Right ventricle myocardium inferior (tissue), 1 donor: ENCODE measurements at regions of chr3 and their contacts with region 1.

Region 1: DNA sequence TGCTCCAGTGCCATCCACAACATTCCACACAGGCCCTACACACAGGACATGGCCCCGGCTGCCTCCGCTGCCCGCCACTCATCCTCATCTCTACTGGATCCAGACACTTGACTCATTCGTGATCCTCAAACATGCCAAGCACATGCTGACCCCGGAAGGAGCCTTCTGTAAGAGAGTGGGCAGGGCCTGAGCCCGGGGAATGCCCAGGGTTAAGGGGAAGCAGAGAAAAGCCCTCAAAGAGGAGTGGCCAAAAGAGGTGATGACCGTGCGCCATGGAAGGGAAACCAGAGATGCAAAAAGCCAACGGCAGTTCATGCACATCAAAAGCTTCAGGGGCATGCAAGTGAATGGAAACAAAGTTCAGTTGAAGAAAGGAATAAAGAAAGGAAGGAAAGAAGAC is 46.1 kb downstream of the RFTN1 start:
- DNase-seq: no peak
- ATAC-seq: no peak

Region 2: GRCh38 chr3:16370872-16371740 is 96.3 kb before region 1 on chr3:
- intact Hi-C with region 1: loop called (anchors 5 kb)
- DNase-seq: peak; percentile 65
- ATAC-seq: no peak

Region 3: DNA sequence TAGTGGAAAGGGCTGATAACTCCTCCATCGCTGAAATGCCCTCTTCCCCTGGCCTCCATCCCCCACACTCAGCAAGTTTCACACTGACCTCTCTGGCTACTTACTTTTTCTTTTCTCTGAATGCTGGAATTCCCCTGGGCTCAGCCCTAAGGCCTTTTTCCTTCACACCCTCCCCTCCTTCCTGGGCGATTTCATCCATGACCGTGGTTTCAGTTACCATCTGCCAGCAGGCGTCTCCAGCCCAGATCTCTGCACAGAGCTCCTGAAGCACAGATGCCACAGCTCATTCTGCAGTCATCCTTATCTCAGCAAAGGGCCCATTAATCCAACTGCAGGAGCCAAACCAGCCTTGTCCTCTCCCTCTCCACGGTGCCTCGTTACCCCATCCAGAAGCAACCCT is 67.9 kb before region 1 on chr3:
- intact Hi-C with region 1: no loop called
- DNase-seq: no peak
- ATAC-seq: peak; percentile 82